Head of caudate nucleus (tissue), 42 donors: ENCODE measurements at regions of chr3 and their contacts with region 1.

Region 1: DNA sequence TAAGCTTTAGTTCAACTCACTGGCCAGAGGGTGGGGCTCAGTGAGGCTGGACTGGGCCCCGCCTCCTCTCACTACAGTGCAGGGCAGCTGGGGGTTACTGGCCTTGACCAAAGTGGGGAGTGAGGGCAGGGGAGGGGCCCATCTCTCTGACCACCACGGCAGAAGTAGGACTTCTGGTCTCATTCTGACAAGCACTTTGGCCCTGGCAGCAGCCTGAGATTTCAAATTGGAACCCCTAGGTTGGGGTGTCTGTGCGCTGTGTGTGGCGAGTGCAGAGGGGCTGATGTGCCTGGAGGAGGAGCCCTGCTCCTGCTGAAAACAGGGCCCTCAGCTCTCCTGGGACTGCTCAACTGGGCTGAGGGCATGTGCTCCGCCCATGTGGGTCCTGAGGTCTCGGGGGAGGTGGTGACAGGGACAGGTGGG is 60.3 kb upstream of the RPL32 start:
- DNase-seq: no peak

Region 2: GRCh38 chr3:12541631-12542030 is 360.0 kb before region 1 on chr3:
- intact Hi-C with region 1: no loop called
- DNase-seq: peak in 16 of 42 donors; percentile 15 to 56 (median 32)

Region 3: DNA sequence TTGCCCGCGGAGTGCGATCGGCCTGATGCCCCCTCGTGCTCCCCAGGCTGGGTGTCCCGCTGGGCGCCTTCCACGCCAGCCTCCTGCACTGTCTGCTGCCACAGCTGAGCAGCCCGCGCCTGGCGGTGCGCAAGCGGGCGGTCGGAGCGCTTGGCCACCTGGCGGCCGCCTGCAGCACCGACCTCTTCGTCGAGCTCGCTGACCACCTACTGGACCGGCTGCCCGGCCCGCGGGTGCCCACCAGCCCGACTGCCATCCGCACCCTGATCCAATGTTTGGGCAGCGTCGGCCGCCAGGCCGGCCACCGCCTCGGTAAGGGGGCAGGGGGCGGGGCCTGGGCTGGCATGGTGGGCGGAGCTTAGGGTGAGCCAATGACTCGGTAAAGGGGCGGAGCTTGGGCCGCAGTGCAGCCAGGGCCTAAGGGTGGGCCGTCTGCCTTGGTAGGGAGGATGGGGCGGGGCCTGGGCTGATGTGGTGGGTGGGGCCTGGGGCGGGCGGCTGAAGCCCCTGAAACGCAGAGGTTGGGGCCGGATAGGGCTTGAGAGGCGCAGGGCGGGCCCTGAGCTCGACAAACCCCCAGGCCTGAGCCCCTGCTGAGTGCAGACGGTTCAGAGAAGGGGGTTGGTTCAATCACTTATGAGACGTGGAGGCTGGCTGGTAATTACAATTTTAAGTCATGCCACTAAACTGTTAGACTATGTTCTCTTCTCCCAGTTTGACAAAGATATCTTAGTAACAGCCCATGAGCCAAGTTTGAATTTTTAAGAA is 91.4 kb before region 1 on chr3:
- intact Hi-C with region 1: no loop called
- DNase-seq: peak; percentile 91 to 99 (median 96)

Region 4: DNA sequence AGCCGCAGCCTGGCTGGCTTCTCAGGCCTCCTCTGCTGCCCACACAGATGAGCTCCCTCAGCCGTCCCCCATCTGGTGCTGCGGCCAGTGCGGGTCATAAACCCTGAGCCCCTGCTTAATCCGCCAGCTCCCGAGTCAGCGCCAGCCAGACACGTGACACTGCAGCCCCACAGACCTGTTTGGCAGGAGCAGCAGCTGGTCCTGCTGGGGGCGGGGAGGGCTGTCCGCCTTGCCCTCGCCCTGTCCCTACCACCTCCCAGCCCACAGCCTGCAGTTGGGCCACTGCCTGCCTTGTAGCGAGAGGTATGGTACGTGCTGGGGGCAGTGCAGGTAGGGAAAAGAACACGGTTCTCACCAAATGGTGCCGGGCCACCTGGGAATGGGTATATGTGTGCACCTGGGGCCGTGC is 85.4 kb after region 1 on chr3:
- intact Hi-C with region 1: loop called (anchors 5 kb)
- DNase-seq: peak in 1 of 42 donors; percentile 36